ENCODE measurements at regions of chr1 and their contacts with region 1.

Region 1: GRCh38 chr1:50978144-50978851 is 8.3 kb downstream of the CDKN2C start:
- DNase-seq: peak in 8 of 9 donors; percentile 9 to 55 (median 38)
- ATAC-seq: peak; percentile 44
- H3K4me3 ChIP-seq: peak overlapping the region; percentile 62
- H3K4me3 Mint-ChIP-seq: peak overlapping the region; percentile 81 to 91 (median 86)
- H3K27ac ChIP-seq: peak overlapping the region; percentile 37
- H3K27ac Mint-ChIP-seq: peak overlapping the region; percentile 38 to 86 (median 70)
- H3K4me1 ChIP-seq: peaks cover 0 to 13% of the 10 kb centered on the region in 2 donors
- H3K4me1 Mint-ChIP-seq: peaks cover 10 to 36% (median 21%) of the 10 kb centered on the region in 7 donors
- H3K27me3 ChIP-seq: peaks cover 0 to 5% of the 10 kb centered on the region in 2 donors
- H3K27me3 Mint-ChIP-seq: peaks cover 34 to 60% (median 37%) of the 10 kb centered on the region in 5 donors

Region 2: DNA sequence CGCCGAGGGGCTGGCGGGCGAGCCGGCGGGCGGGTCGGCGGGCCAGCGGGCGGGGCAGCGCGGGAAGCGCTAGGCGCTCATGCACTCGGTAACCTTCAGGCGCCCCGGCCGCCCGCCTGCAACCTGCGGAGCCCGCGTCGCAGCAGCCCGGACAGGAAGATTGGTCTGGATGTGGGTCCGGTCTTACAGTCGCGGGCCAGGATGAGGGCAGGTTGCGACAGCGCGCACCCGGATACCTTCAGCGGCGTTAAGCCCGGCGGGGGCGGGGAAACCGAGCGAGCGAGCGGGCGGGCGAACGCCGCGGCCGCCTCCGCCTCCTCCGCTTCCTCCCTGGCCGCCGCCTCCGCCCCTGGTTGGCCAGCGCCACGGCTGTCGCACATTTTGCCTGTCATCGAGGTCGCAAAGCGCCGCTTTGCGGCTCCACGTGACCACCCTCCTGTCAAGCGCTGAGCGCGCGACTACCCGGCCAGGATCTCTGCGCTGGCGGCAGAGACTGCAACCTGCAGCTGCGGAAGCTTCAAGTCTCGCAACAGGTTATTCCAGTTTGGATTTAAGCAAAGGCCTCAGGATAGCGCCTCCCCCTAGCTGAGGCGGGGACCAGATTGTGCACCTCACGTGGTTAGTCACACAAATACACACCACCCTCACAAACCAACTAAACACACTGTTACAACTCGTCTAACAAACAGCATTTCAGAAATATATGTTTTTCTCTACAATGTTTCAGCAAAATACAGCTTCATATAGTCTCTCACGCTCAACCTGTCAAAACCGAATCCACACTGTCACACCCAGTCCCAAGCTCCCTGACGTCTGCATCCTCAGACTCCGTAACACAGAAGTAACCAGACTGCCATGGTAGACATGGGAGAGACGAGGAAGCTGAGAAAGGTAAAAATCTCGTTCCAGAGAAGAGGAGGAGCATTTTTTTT is 18.1 kb before region 1 on chr1 and contains the start of gene FAF1:
- CTCF ChIA-PET with region 1: no interaction called
- POLR2A ChIA-PET with region 1: interaction called, 82 read pairs
- intact Hi-C with region 1: loop called (anchors 1 kb)
- DNase-seq: peak; percentile 94 to 98 (median 98)
- ATAC-seq: peak; percentile 98
- H3K4me3 ChIP-seq: peak within 1 kb of the TSS; percentile 61
- H3K4me3 Mint-ChIP-seq: peak within 1 kb of the TSS; percentile 82 to 98 (median 92)
- H3K27ac ChIP-seq: peak within 1 kb of the TSS; percentile 71
- H3K27ac Mint-ChIP-seq: peak within 1 kb of the TSS; percentile 64 to 97 (median 96)
- H3K4me1 ChIP-seq: peaks cover 7% of the 10 kb centered on the region in 2 donors
- H3K4me1 Mint-ChIP-seq: peaks cover 14 to 35% (median 24%) of the 10 kb centered on the region in 7 donors
- H3K27me3 ChIP-seq: no peaks in the 10 kb centered on the region
- H3K27me3 Mint-ChIP-seq: peaks cover 0 to 9% (median 0%) of the 10 kb centered on the region in 5 donors
- total RNA-seq, gene FAF1: 46.4 to 66.6 (median 52.5) TPM

Region 3: GRCh38 chr1:50968158-50968820 is 10.0 kb before region 1 on chr1:
- CTCF ChIA-PET with region 1: interaction called, 3 read pairs
- POLR2A ChIA-PET with region 1: interaction called, 31 read pairs
- intact Hi-C with region 1: loop called (anchors 1 kb)
- DNase-seq: peak; percentile 67 to 86 (median 85)
- ATAC-seq: peak; percentile 89
- H3K4me3 ChIP-seq: peak overlapping the region; percentile 83
- H3K4me3 Mint-ChIP-seq: peak overlapping the region; percentile 92 to 99 (median 98)
- H3K27ac ChIP-seq: peak overlapping the region; percentile 96
- H3K27ac Mint-ChIP-seq: peak overlapping the region; percentile 71 to 100 (median 91)
- H3K4me1 ChIP-seq: peaks cover 6 to 15% of the 10 kb centered on the region in 2 donors
- H3K4me1 Mint-ChIP-seq: peaks cover 18 to 29% (median 26%) of the 10 kb centered on the region in 7 donors
- H3K27me3 ChIP-seq: no peaks in the 10 kb centered on the region
- H3K27me3 Mint-ChIP-seq: peaks cover 0 to 12% (median 2%) of the 10 kb centered on the region in 5 donors

Measured in naive thymus-derived CD4-positive, alpha-beta T cell (primary cell).